ENCODE measurements at regions of chr15 and their contacts with region 1.

Region 1: GRCh38 chr15:75201609-75202250 is at the start of gene C15orf39:
- DNase-seq: peak; percentile 87
- H3K4me3 ChIP-seq: peak within 1 kb of the TSS; percentile 88
- H3K27ac ChIP-seq: peak within 1 kb of the TSS; percentile 76
- H3K4me1 ChIP-seq: peaks cover 56% of the 10 kb centered on the region
- CTCF ChIP-seq: peak; percentile 87
- total RNA-seq, gene C15orf39: 19.7 and 26.5 TPM in 2 replicates

Region 2: GRCh38 chr15:74781431-74782258 is 420.1 kb before region 1 on chr15 and contains the start of gene CSK:
- CTCF ChIA-PET with region 1: no interaction called
- POLR2A ChIA-PET with region 1: no interaction called
- intact Hi-C with region 1: loop called (anchors 5 kb)
- DNase-seq: peak; percentile 89
- H3K4me3 ChIP-seq: peak within 1 kb of the TSS; percentile 97
- H3K27ac ChIP-seq: peak within 1 kb of the TSS; percentile 99
- H3K4me1 ChIP-seq: peaks cover 72% of the 10 kb centered on the region
- CTCF ChIP-seq: peak; percentile 55
- total RNA-seq, gene CSK: 106 and 112 TPM in 2 replicates

Region 3: DNA sequence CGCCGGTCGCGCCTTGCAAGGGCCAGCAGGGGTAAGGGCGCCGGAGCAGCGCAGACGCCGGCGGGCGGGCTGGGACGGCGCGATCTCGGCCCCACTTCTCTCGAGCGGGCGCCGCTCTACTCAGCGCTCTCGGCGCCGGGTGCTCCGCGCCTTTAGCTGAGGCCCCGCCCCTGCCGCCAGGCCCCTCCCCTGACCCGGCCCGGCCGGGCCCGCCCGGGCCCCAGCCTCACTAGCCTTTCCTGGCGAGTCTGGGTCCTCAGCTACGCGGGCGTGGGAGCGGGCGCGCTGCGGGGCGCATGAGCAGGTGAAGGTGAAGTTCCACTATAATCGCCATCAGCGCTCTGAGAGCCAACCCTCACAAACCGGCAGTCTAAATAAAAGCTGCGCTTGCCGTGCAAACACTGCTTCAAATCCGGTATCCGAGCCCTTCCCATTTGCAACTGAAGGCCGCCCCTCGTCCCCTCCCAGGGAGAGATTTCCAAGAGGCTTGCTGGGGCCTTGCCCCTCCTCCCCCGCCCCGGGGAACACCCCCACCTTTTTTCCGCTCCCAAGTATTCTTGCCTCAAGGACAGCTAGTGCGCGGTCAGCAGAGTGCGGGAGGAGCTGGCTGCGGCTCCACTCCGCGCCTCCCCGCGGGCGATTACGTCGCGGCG is 245.0 kb before region 1 on chr15 and contains the start of gene RPP25:
- CTCF ChIA-PET with region 1: no interaction called
- POLR2A ChIA-PET with region 1: no interaction called
- intact Hi-C with region 1: loop called (anchors 5 kb)
- DNase-seq: peak; percentile 80
- H3K4me3 ChIP-seq: peak within 1 kb of the TSS; percentile 65
- H3K27ac ChIP-seq: no peak within 1 kb of the TSS
- H3K4me1 ChIP-seq: peaks cover 60% of the 10 kb centered on the region
- CTCF ChIP-seq: no peak
- total RNA-seq, gene RPP25: 2.6 and 3.0 TPM in 2 replicates

Region 4: GRCh38 chr15:75029378-75030022 is 172.2 kb before region 1 on chr15:
- CTCF ChIA-PET with region 1: interaction called, 4 read pairs
- POLR2A ChIA-PET with region 1: no interaction called
- intact Hi-C with region 1: loop called (anchors 1 kb)
- DNase-seq: peak; percentile 88
- H3K4me3 ChIP-seq: peak overlapping the region; percentile 12
- H3K27ac ChIP-seq: peak overlapping the region; percentile 27
- H3K4me1 ChIP-seq: peaks cover 81% of the 10 kb centered on the region
- CTCF ChIP-seq: peak; percentile 98

Region 5: GRCh38 chr15:75042730-75043508 is 158.8 kb before region 1 on chr15:
- CTCF ChIA-PET with region 1: interaction called, 11 read pairs
- POLR2A ChIA-PET with region 1: interaction called, 20 read pairs
- intact Hi-C with region 1: loop called (anchors 1 kb)
- DNase-seq: peak; percentile 98
- H3K4me3 ChIP-seq: peak overlapping the region; percentile 43
- H3K27ac ChIP-seq: peak overlapping the region; percentile 87
- H3K4me1 ChIP-seq: peaks cover 63% of the 10 kb centered on the region
- CTCF ChIP-seq: peak; percentile 73

Region 6: DNA sequence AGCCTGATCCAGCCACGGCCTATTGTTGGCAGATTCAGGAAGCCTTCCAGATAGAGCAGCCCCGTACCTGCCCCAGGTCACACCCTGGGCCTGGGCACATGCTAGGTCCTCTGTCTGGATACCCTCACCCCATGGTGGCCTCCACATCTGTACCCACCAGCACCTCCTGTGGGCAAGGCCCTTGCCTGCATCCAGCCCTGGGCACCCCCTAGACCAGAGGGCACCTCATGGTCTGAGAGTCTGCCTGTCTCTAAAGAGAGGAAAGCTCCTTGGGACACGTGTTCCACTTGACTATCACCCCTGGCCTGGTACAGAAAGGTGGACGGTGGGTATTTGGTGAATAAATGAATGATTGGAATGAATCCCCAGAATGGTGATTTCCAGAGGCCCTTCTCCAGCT is 125.3 kb after region 1 on chr15:
- CTCF ChIA-PET with region 1: no interaction called
- POLR2A ChIA-PET with region 1: no interaction called
- intact Hi-C with region 1: no loop called
- DNase-seq: no peak
- H3K4me3 ChIP-seq: no peak overlapping the region
- H3K27ac ChIP-seq: no peak overlapping the region
- H3K4me1 ChIP-seq: no peaks in the 10 kb centered on the region
- CTCF ChIP-seq: no peak